HEK293T (cell line): ENCODE measurements at regions of chr3 and their contacts with region 1.

Region 1: DNA sequence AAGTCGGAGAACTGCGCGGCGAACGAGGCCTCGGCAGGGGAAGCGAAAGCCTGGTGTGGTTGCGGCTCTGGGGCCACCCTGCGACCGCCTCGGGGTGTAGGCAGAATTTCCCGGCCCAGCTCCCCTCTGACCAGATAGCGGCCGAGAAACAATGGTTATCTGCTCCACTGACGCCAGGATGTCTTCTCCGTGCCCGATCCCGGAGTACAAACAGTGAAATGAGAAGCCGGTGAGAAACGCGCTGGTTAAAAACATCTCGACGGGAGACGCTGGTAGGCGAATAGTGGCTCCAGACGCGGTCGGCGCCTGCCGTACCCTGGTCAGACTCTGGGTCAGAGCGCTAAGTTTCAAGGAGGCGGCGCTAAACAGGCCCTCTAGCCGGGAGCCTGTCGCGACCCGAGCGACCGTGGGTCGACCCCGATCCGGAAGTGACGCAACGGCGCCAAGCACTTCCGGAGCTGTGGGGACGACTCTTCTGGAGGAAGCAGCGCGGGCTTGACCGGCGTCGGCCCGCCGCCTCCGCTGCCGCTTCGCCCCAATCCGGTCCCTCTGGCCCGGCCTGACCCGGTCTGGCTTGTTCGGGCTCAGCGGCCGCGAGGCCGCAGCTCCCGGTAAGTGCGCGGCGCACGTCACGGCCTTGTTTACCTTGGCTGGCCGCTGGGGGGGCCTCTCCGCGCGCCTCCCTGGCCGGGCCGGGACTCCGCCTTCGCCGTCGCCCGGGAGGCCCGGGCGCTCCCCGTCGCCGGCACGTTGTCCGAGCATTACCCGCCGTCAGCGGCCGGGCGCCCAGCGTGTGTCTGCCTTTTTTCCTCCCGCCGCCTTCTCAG is at the start of gene ARIH2:
- DNase-seq: peak; percentile 97

Region 2: DNA sequence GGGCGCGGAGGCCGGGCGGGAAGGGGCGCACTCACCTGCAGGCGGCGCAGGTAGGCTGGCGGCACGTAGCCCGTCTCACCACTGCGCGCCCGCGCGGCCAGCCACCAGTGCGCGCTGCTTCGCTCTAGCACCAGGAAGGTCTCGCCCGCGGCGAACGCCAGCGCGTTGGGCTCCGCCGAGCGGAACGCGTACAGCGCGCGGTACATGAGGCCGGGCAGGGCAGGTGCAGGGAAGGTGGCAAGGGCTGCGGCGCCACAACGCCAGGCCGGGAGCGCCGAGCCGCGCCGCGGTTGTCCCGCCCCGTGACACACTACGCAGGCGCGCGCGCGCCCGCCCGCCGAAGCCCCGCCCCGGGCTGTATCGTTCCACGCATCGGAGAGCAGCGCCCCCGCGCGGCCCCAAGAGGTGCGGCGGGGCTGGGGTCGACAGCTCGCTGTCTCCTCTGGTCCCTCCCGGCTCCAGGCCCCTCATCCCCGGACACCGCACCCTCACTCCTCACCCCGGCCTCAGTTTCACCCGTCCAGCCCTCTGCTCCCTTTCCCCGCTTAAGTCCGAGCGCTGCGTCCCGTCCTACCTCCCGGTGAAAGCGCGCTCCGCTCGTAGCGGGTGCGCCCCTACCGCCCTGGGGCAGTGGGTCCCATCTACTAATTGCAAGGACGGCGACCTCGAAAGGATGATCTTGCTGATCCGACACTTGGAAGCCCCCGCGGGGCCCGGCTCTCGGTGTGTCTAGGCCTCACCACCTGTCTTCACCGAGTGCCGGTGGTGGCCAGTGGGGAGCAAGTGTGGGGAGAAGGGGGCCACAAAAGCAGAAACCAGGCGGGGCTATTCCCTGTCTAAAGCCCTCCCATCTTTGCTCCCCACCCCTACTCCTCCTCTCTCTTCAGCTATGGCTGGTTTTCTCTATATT is 232.7 kb before region 1 on chr3 and contains the start of gene NCKIPSD:
- CTCF ChIA-PET with region 1: no interaction called
- POLR2A ChIA-PET with region 1: no interaction called
- DNase-seq: peak; percentile 97

Region 3: DNA sequence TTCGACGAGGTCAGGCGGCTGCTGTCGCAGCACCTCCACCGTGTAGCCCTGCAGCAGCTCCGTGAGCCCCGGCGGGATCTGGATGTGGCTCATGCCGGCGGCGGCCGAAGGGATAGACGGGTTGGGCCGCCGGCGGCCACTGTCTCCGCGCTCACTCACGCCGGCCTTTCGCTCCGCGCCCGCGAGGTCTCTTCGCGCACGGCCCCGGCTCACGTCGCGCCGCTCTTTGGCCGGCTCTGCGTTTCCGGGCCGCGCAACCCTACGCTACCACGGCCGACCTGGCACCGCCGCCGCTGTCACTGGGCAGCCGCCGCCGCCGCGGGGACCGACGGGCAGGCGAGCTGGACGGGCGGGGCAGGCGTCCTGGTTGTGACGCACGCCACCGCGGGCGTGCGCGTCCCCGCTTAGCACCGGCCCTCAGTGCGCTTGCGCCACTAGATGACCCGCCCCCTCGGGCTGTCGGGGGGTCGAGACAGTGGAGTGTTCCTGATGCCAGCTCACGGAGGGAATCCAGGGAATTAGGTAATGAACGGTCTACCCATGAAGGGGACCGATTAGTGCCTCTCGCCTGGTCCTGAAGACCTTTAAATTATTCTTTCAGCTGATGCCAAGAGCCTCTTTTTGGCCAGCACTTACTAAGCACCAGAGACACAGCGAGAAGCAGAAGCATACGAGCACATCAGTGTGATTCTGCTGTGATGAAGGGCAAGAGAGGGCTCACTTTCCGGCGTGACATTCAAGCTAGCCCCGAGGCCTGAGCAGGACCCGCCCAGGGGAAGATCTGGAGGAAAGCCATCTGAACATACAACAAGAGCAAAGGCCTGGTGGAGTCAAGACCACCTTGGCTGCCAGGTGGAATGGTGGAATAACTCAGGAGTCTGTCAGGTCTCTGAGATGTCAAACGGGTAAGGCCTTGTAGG is 70.8 kb before region 1 on chr3 and contains the start of gene PRKAR2A:
- CTCF ChIA-PET with region 1: no interaction called
- POLR2A ChIA-PET with region 1: interaction called, 21 read pairs
- DNase-seq: peak; percentile 96

Region 4: DNA sequence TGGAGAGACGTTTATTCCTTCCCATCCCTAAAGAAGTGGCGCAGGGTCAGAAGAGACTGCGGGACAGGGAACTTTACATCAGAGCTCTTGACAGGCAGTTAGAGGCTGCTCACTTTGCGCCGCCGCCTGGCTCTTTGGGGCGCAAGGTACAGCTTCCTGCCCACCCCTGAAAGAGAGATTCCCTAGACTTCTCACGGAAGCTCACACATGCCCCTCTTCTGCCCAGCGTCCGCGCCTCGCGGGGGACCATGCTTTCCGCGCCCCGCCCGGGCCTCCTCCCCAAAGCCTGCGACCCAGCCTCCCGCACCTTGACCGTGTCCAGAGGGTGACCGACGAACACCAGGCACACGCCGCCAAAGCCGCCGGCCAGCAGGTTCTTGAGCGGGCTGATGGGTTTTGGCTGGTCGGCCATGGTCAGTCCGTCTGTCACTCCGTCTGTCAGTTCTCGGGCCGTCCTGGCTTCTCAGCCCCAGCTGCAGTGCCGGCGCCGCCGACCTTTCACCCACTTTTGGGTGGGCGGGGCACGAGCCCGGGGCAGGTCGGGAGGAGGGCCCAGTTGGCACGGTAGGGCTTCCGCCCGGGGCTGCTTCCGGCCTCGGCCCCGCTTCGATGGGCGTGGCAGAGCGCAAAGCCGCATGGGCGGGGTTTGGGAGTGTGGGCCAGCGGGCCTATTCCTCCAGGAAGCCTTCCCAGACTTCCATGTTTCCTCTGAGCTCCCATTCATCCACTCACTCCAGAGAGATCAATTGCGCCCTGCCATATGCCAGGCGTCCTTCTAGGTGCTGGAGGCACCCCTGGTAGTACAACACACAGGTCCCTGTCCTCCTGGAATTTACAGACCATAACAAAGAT is 20.0 kb before region 1 on chr3 and contains the start of gene SLC25A20:
- CTCF ChIA-PET with region 1: no interaction called
- POLR2A ChIA-PET with region 1: interaction called, 14 read pairs
- DNase-seq: peak; percentile 96

Region 5: GRCh38 chr3:49032646-49033304 is 114.2 kb after region 1 on chr3:
- CTCF ChIA-PET with region 1: no interaction called
- POLR2A ChIA-PET with region 1: no interaction called
- DNase-seq: no peak